ENCODE measurements at regions of chr11 and their contacts with region 1.

Region 1: DNA sequence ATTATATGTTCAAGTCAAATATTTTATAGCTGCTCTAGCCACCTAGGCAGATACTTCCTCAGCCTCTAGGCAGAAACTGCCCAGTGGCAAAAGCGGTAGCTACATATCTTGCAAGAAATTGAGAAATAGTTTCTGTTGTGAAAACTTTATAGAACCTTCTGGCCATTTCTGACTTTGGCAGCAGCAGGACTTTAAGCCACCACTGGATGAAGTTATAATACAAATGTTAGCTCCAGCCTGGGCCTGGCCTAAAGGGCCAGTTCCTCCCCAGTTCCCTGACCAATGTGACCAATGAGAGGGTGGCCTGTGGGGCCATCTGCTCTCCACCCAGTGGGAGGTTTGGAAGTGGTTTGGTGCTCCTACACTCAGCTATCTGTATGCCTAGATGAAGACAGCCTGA is 254.0 kb upstream of the NARS2 start:
- DNase-seq: no peak
- ATAC-seq: no peak
- H3K4me3 ChIP-seq: no peak overlapping the region
- H3K4me3 Mint-ChIP-seq: no peak overlapping the region
- H3K27ac ChIP-seq: no peak overlapping the region
- H3K27ac Mint-ChIP-seq: no peak overlapping the region
- H3K4me1 ChIP-seq: no peaks in the 10 kb centered on the region
- H3K4me1 Mint-ChIP-seq: no peaks in the 10 kb centered on the region
- H3K27me3 ChIP-seq: no peaks in the 10 kb centered on the region
- H3K27me3 Mint-ChIP-seq: peaks cover 10% of the 10 kb centered on the region
- CTCF ChIP-seq: no peak

Region 2: GRCh38 chr11:78722786-78723185 is 105.9 kb before region 1 on chr11:
- CTCF ChIA-PET with region 1: no interaction called
- POLR2A ChIA-PET with region 1: no interaction called
- intact Hi-C with region 1: no loop called
- DNase-seq: no peak
- ATAC-seq: no peak
- H3K4me3 ChIP-seq: no peak overlapping the region
- H3K4me3 Mint-ChIP-seq: no peak overlapping the region
- H3K27ac ChIP-seq: no peak overlapping the region
- H3K27ac Mint-ChIP-seq: no peak overlapping the region
- H3K4me1 ChIP-seq: no peaks in the 10 kb centered on the region
- H3K4me1 Mint-ChIP-seq: no peaks in the 10 kb centered on the region
- H3K27me3 ChIP-seq: no peaks in the 10 kb centered on the region
- H3K27me3 Mint-ChIP-seq: peaks cover 5% of the 10 kb centered on the region
- CTCF ChIP-seq: no peak

Region 3: GRCh38 chr11:78804991-78805390 is 23.7 kb before region 1 on chr11:
- CTCF ChIA-PET with region 1: interaction called, 3 read pairs
- POLR2A ChIA-PET with region 1: no interaction called
- intact Hi-C with region 1: loop called in 1 of 2 experiments (anchors 1 kb)
- DNase-seq: no peak
- ATAC-seq: no peak
- H3K4me3 ChIP-seq: no peak overlapping the region
- H3K4me3 Mint-ChIP-seq: no peak overlapping the region
- H3K27ac ChIP-seq: no peak overlapping the region
- H3K27ac Mint-ChIP-seq: no peak overlapping the region
- H3K4me1 ChIP-seq: no peaks in the 10 kb centered on the region
- H3K4me1 Mint-ChIP-seq: no peaks in the 10 kb centered on the region
- H3K27me3 ChIP-seq: no peaks in the 10 kb centered on the region
- H3K27me3 Mint-ChIP-seq: peaks cover 3% of the 10 kb centered on the region
- CTCF ChIP-seq: no peak

Measured in CD8-positive, alpha-beta T cell (primary cell).